Calu3 (cell line): ENCODE measurements at regions of chr20 and their contacts with region 1.

Region 1: DNA sequence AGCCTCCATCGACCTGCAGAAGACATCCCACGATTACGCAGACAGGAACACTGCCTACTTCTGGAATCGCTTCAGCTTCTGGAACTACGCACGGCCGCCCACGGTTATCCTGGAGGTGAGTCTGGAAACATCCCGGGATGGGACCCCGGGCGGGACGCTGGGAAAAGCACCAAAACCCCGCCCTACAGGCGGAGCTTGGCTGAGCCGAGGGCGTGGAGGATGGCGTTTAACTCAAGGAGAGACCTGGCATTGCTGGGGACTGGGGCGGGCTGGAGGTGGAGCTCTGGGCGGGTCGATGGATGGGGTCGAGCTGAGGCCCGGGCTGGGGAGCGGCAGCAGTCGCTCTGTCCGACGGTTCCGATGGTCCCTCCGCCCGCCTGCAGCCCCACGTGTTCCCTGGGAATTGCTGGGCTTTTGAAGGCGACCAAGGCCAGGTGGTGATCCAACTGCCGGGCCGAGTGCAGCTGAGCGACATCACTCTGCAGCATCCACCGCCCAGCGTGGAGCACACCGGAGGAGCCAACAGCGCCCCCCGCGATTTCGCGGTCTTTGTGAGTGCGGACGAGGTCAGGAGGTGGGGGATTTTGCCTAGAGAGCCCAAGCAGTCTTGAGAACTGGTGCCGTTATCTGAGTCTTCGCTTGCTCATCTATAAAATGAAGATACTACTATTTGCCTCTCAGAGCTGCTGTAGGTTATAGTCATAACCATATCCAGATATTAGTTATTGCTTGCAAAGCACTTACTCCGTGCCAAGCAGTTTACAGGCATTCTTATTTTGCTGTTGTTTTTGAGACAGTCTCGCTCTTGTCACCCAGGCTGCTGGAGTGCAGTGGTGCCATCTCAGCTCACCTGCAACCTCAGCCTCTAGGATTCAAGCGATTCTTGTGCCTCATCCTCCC is 3.8 kb downstream of the SPAG4 start:
- DNase-seq: peak; percentile 96
- H3K4me3 Mint-ChIP-seq: peak overlapping the region; percentile 94
- H3K27ac Mint-ChIP-seq: peak overlapping the region; percentile 100
- H3K4me1 Mint-ChIP-seq: peaks cover 45% of the 10 kb centered on the region
- H3K27me3 Mint-ChIP-seq: no peaks in the 10 kb centered on the region
- CTCF ChIP-seq: peak; percentile 60

Region 2: GRCh38 chr20:35511814-35512420 is 107.5 kb before region 1 on chr20:
- CTCF ChIA-PET with region 1: interaction called, 10 read pairs
- intact Hi-C with region 1: loop called (anchors 5 kb)
- DNase-seq: peak; percentile 63
- H3K4me3 Mint-ChIP-seq: no peak overlapping the region
- H3K27ac Mint-ChIP-seq: no peak overlapping the region
- H3K4me1 Mint-ChIP-seq: peaks cover 13% of the 10 kb centered on the region
- H3K27me3 Mint-ChIP-seq: no peaks in the 10 kb centered on the region
- CTCF ChIP-seq: peak; percentile 62

Region 3: GRCh38 chr20:35568645-35569262 is 50.7 kb before region 1 on chr20:
- CTCF ChIA-PET with region 1: interaction called, 8 read pairs
- intact Hi-C with region 1: loop called (anchors 2 kb)
- DNase-seq: peak; percentile 62
- H3K4me3 Mint-ChIP-seq: no peak overlapping the region
- H3K27ac Mint-ChIP-seq: no peak overlapping the region
- H3K4me1 Mint-ChIP-seq: peaks cover 8% of the 10 kb centered on the region
- H3K27me3 Mint-ChIP-seq: no peaks in the 10 kb centered on the region
- CTCF ChIP-seq: peak; percentile 74

Region 4: GRCh38 chr20:35592339-35592974 is 27.0 kb before region 1 on chr20:
- CTCF ChIA-PET with region 1: interaction called, 11 read pairs
- intact Hi-C with region 1: no loop called
- DNase-seq: no peak
- H3K4me3 Mint-ChIP-seq: no peak overlapping the region
- H3K27ac Mint-ChIP-seq: no peak overlapping the region
- H3K4me1 Mint-ChIP-seq: peaks cover 16% of the 10 kb centered on the region
- H3K27me3 Mint-ChIP-seq: no peaks in the 10 kb centered on the region
- CTCF ChIP-seq: no peak

Region 5: GRCh38 chr20:35664544-35665221 is 45.2 kb after region 1 on chr20 and contains the starts of genes CPNE1 and RBM12:
- CTCF ChIA-PET with region 1: interaction called, 6 read pairs
- intact Hi-C with region 1: loop called (anchors 5 kb)
- DNase-seq: peak; percentile 97
- H3K4me3 Mint-ChIP-seq: peak within 1 kb of the TSS; percentile 98
- H3K27ac Mint-ChIP-seq: peak within 1 kb of the TSS; percentile 99
- H3K4me1 Mint-ChIP-seq: peaks cover 43% of the 10 kb centered on the region
- H3K27me3 Mint-ChIP-seq: no peaks in the 10 kb centered on the region
- CTCF ChIP-seq: no peak
- total RNA-seq, gene CPNE1: 458 and 505 TPM in 2 replicates
- total RNA-seq, gene RBM12: 125 and 133 TPM in 2 replicates

Region 6: GRCh38 chr20:35883778-35884540 is 264.5 kb after region 1 on chr20:
- CTCF ChIA-PET with region 1: interaction called, 4 read pairs
- intact Hi-C with region 1: loop called (anchors 5 kb)
- DNase-seq: peak; percentile 79
- H3K4me3 Mint-ChIP-seq: peak overlapping the region; percentile 33
- H3K27ac Mint-ChIP-seq: peak overlapping the region; percentile 53
- H3K4me1 Mint-ChIP-seq: peaks cover 12% of the 10 kb centered on the region
- H3K27me3 Mint-ChIP-seq: no peaks in the 10 kb centered on the region
- CTCF ChIP-seq: peak; percentile 76